CD8-positive, alpha-beta T cell (primary cell): ENCODE measurements at regions of chr12 and their contacts with region 1.

Region 1: DNA sequence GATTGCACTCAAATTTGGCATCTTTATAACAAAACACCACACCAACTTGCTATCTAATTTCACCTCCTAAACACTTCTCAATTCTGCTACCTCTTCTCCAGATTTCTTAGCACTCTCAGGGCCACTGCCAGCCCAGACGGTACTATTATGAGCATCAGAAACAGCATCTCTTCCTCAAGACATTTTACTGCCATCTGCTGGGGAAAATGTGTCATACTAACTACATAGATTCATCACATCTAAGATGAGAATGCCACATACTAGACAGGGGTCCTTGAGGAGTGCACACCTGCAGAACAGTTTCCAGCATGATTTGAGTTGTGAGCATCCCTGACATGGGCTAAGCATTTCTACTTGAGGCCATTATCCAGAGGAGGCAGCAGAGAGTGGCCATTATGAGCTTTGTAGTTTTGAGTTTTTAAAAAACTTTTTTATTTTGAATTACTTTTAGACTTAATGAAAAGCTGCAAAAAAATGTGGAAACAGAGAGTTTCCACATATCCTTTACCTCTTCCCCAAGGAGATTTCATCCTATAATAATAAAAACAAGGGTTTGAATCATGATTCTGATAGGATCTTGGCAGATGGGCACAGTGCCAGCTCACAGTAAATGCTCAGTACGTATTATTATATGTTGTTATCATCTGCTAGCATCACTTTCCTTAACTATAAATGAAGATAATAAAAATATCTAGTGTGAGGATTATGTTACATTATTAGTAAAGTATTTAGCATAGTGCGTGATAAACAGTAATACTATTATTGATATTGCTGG is 15.2 kb upstream of the GRIP1 start:
- DNase-seq: peak in 3 of 9 experiments; percentile 20 to 77 (median 64)
- ATAC-seq: peak; percentile 78
- H3K4me3 ChIP-seq: no peak overlapping the region
- H3K4me3 Mint-ChIP-seq: no peak overlapping the region
- H3K27ac ChIP-seq: no peak overlapping the region
- H3K27ac Mint-ChIP-seq: no peak overlapping the region
- H3K4me1 ChIP-seq: peaks cover 12% of the 10 kb centered on the region
- H3K4me1 Mint-ChIP-seq: peaks cover 23% of the 10 kb centered on the region
- H3K27me3 ChIP-seq: no peaks in the 10 kb centered on the region
- H3K27me3 Mint-ChIP-seq: no peaks in the 10 kb centered on the region
- CTCF ChIP-seq: peak; percentile 77

Region 2: DNA sequence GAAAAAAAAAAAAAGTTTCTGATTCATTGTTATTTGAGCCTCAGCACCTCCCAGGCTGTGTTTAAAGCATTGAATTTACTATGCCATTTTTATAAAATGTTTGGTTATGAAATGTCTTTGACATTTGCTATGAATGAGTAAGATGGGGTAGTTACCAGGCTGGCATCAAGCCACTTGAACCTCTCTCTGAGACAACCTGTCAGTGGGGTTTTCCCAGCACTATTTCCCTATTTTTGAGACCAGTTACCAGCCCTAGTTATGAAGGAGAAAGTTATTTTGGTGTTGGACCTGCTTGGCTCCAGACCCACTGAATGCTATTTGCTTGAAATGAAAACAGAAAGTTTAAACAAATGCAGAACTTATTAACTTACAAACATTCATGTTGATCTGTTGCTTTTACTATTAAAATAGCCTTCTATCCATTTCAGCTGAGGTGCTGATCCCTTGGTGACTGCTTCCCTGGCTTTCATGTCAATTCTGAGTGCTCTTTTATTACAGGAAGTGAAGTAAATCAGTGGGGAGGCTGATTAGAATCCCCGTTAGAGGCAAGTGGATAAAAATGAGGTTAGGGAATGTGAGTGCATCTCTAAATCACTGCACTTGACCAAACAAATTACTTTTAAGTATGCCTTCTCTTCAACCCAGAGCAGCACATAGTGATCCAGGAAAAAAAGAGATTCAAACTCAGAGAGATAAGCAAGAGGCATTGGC is 601.4 kb before region 1 on chr12:
- CTCF ChIA-PET with region 1: no interaction called
- POLR2A ChIA-PET with region 1: no interaction called
- intact Hi-C with region 1: no loop called
- DNase-seq: peak in 1 of 9 experiments; percentile 10
- ATAC-seq: no peak
- H3K4me3 ChIP-seq: no peak overlapping the region
- H3K4me3 Mint-ChIP-seq: no peak overlapping the region
- H3K27ac ChIP-seq: no peak overlapping the region
- H3K27ac Mint-ChIP-seq: no peak overlapping the region
- H3K4me1 ChIP-seq: no peaks in the 10 kb centered on the region
- H3K4me1 Mint-ChIP-seq: no peaks in the 10 kb centered on the region
- H3K27me3 ChIP-seq: no peaks in the 10 kb centered on the region
- H3K27me3 Mint-ChIP-seq: peaks cover 16% of the 10 kb centered on the region
- CTCF ChIP-seq: no peak

Region 3: DNA sequence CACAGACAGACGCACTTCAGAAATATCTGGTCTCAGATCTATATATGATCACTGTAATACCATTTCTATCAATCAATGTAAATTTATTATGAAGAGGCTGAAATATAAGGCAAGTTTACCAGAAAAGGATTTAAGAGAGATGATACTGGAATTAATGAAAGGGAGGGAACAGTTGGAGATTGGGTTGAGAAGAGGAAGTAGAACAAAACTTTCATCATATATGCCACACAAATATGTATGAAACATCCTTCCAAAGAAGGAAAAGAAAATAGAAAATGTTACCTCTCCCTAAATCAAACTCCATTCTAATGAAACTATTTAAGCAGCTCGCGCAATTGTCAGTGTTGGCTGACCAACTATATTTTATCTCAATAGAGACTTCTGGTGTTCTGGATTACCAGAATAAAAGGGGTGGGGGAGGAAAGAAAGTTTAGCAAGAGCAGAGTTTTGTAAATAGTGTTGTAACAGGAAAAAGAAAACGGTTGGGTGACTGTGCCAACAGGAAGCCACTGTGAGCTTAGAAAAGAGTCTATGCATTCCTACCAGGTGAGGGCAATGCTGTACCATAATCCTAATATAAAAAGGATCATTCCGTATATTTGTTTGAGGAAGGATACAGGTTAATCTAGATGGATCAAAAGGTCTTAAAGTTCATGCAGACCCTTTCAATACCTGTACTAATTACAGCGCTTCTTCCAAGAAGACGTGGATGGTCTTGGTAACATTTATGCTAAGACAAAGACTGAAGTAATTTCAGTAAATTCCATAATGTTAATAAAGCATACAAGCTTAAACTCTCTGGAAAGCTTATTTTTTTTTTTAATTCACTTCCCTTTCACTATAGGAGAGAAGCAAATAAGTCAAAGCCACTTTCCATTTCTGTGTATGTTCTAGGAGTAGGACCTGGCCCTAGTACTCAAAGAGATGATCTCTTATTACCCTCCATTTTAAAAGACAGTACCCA is 549.0 kb before region 1 on chr12:
- CTCF ChIA-PET with region 1: no interaction called
- POLR2A ChIA-PET with region 1: no interaction called
- intact Hi-C with region 1: loop called (anchors 2 kb)
- DNase-seq: peak in 2 of 9 experiments; percentile 19 to 42
- ATAC-seq: no peak
- H3K4me3 ChIP-seq: no peak overlapping the region
- H3K4me3 Mint-ChIP-seq: no peak overlapping the region
- H3K27ac ChIP-seq: no peak overlapping the region
- H3K27ac Mint-ChIP-seq: peak overlapping the region; percentile 82
- H3K4me1 ChIP-seq: no peaks in the 10 kb centered on the region
- H3K4me1 Mint-ChIP-seq: peaks cover 21% of the 10 kb centered on the region
- H3K27me3 ChIP-seq: no peaks in the 10 kb centered on the region
- H3K27me3 Mint-ChIP-seq: no peaks in the 10 kb centered on the region
- CTCF ChIP-seq: peak; percentile 35

Region 4: GRCh38 chr12:66269757-66270383 is 424.2 kb before region 1 on chr12:
- CTCF ChIA-PET with region 1: interaction called, 23 read pairs
- POLR2A ChIA-PET with region 1: no interaction called
- intact Hi-C with region 1: loop called (anchors 1 kb)
- DNase-seq: peak in 3 of 9 experiments; percentile 13 to 65 (median 56)
- ATAC-seq: peak; percentile 62
- H3K4me3 ChIP-seq: no peak overlapping the region
- H3K4me3 Mint-ChIP-seq: no peak overlapping the region
- H3K27ac ChIP-seq: no peak overlapping the region
- H3K27ac Mint-ChIP-seq: no peak overlapping the region
- H3K4me1 ChIP-seq: no peaks in the 10 kb centered on the region
- H3K4me1 Mint-ChIP-seq: peaks cover 7% of the 10 kb centered on the region
- H3K27me3 ChIP-seq: no peaks in the 10 kb centered on the region
- H3K27me3 Mint-ChIP-seq: peaks cover 2% of the 10 kb centered on the region
- CTCF ChIP-seq: peak; percentile 72

Region 5: GRCh38 chr12:66329941-66330340 is 364.1 kb before region 1 on chr12:
- CTCF ChIA-PET with region 1: no interaction called
- POLR2A ChIA-PET with region 1: no interaction called
- intact Hi-C with region 1: loop called in 1 of 2 experiments (anchors 5 kb)
- DNase-seq: no peak
- ATAC-seq: no peak
- H3K4me3 ChIP-seq: no peak overlapping the region
- H3K4me3 Mint-ChIP-seq: no peak overlapping the region
- H3K27ac ChIP-seq: no peak overlapping the region
- H3K27ac Mint-ChIP-seq: no peak overlapping the region
- H3K4me1 ChIP-seq: no peaks in the 10 kb centered on the region
- H3K4me1 Mint-ChIP-seq: peaks cover 38% of the 10 kb centered on the region
- H3K27me3 ChIP-seq: no peaks in the 10 kb centered on the region
- H3K27me3 Mint-ChIP-seq: no peaks in the 10 kb centered on the region
- CTCF ChIP-seq: no peak

Region 6: DNA sequence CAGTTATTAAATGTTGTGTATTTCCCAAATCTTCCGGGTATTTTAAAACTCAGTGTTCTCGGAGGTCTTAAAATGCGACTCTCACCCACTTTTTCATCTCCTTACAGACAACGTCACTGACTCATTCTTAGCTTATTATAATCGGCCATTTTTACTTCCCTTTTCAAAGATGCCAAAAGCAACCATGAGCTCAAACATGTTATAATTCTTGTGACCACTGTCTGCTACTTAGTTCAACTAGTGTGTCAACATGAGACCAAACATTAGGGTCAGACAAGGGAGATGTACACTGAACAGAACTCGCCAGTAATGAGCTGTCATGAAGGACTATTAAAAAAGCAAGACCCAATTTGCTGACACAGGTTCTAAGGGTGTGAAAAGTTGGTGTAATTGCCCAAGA is 11.0 kb before region 1 on chr12:
- CTCF ChIA-PET with region 1: interaction called, 33 read pairs
- POLR2A ChIA-PET with region 1: no interaction called
- intact Hi-C with region 1: no loop called
- DNase-seq: no peak
- ATAC-seq: no peak
- H3K4me3 ChIP-seq: no peak overlapping the region
- H3K4me3 Mint-ChIP-seq: no peak overlapping the region
- H3K27ac ChIP-seq: no peak overlapping the region
- H3K27ac Mint-ChIP-seq: no peak overlapping the region
- H3K4me1 ChIP-seq: no peaks in the 10 kb centered on the region
- H3K4me1 Mint-ChIP-seq: no peaks in the 10 kb centered on the region
- H3K27me3 ChIP-seq: peaks cover 0 to 5% of the 10 kb centered on the region in 2 experiments
- H3K27me3 Mint-ChIP-seq: peaks cover 15% of the 10 kb centered on the region
- CTCF ChIP-seq: no peak

Region 7: DNA sequence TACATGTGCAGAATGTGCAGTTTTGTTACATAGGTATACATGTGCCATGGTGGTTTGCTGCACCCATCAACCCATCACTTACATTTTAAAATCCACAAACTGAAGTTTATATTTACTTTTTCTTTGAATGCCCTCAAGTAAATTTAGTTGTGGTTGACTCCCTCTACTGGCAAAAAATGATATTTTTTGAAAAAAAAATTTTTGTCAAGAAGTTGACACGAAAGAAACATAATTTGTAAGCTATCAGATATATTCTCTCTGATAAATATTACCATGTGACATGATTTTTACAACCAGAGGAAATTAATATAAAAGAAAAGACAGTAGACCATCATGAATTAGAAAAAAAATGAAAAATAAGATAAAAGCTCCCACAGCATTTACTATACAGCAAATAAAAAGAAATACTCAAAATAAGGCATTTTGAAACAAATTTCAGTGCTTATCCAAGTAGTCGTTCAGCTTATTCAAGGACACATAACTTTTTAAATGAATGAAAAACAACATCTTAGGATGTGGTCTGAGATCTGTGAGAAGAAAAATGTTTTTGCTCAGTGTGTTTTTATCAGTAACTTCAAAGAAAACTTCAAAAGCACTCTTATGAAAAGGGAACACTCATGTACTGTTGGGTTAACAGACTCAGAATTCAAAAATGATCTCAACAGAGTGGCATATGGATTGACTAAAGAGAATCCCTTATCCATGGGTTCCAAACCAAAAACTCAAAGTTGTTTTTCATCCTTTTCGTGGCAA is 14.8 kb after region 1 on chr12:
- CTCF ChIA-PET with region 1: interaction called, 31 read pairs
- POLR2A ChIA-PET with region 1: no interaction called
- intact Hi-C with region 1: loop called in 1 of 2 experiments (anchors 2 kb)
- DNase-seq: peak in 2 of 9 experiments; percentile 26 to 63
- ATAC-seq: peak; percentile 86
- H3K4me3 ChIP-seq: no peak overlapping the region
- H3K4me3 Mint-ChIP-seq: peak overlapping the region; percentile 46
- H3K27ac ChIP-seq: peak overlapping the region; percentile 24 to 41
- H3K27ac Mint-ChIP-seq: peak overlapping the region; percentile 78
- H3K4me1 ChIP-seq: peaks cover 37% of the 10 kb centered on the region
- H3K4me1 Mint-ChIP-seq: peaks cover 48% of the 10 kb centered on the region
- H3K27me3 ChIP-seq: no peaks in the 10 kb centered on the region
- H3K27me3 Mint-ChIP-seq: no peaks in the 10 kb centered on the region
- CTCF ChIP-seq: peak; percentile 76